OCI-LY7 (cell line): ENCODE measurements at regions of chr2 and their contacts with region 1.

Region 1: DNA sequence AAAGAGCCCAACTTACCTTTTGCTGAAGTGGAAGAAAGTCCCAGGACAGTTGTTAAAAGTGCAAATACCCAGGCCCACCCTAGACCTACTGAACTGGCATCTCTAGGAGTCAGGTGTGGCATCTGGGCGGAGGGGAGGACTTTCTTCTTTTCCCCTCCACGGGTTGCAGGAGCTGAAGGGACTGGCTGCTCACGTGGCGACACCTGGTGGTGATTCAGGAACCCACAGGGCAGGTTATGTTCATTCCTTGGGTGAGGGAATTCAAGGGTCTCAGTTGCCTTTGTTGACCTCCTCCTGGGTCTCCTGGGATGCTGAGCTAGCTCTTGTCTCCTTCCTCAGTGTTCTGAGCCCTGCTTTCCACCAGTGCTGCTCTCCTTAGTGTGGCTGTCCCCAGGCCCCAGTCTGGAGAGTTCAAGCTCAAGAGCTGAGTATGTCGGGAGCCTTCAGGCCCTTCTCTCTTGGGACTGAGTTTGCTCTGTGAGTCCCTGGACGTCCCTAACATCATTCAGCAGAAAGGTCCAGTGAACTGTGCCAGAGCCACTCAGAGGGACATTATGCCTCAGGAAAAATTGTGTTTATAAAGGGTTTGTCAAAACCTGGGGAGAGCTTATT is 56.9 kb downstream of the DYSF start:
- DNase-seq: peak; percentile 71
- H3K4me3 ChIP-seq: no peak overlapping the region
- H3K27ac ChIP-seq: no peak overlapping the region
- H3K4me1 ChIP-seq: no peaks in the 10 kb centered on the region
- CTCF ChIP-seq: peak; percentile 93

Region 2: GRCh38 chr2:71299507-71299906 is 210.8 kb before region 1 on chr2:
- CTCF ChIA-PET with region 1: interaction called, 4 read pairs
- POLR2A ChIA-PET with region 1: interaction called, 3 read pairs
- intact Hi-C with region 1: loop called (anchors 1 kb)
- DNase-seq: peak; percentile 45
- H3K4me3 ChIP-seq: no peak overlapping the region
- H3K27ac ChIP-seq: no peak overlapping the region
- H3K4me1 ChIP-seq: no peaks in the 10 kb centered on the region
- CTCF ChIP-seq: peak; percentile 95

Region 3: DNA sequence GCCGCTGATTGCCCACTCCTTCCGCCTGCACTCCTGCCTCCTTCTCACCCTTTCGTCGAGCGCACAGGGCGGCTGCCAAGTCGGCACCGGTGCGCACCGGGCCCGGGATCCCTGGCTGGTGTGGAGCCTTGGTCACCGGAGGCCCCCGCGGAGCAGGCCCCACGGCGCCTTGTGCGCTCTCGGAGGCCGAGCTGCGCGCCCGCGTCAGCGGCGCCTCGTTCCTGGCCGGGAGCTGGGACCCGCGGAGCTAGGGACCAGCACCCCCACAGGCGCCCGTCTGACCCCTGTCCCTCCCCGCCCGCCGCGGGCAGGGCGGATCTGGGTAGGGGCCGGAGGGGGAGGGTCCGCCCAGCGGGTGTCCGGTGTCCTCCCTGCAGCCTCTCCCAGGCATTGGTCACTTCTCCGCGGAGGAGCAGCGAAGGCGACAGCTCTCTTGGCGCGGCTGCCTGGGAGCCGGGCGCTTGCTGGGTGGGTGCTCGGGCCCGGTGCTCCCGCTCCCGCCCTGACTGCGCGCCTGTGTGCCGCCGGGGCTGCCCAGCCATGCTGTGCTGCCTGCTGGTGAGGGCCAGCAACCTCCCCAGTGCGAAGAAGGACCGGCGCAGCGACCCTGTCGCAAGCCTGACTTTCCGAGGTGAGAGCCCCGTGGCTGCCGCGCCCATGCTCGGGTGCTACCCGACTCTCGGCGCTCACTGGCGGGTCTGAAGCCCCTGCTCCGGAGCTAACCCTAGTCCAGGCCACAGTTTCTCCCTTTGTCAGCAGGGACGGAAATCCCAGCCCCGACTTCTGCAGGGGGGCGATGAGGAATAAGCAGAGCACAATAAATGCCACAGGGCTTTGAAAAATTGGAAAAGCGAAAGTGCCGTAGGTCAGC is 43.8 kb before region 1 on chr2:
- CTCF ChIA-PET with region 1: no interaction called
- POLR2A ChIA-PET with region 1: no interaction called
- intact Hi-C with region 1: loop called (anchors 10 kb)
- DNase-seq: no peak
- H3K4me3 ChIP-seq: no peak overlapping the region
- H3K27ac ChIP-seq: no peak overlapping the region
- H3K4me1 ChIP-seq: no peaks in the 10 kb centered on the region
- CTCF ChIP-seq: no peak

Region 4: DNA sequence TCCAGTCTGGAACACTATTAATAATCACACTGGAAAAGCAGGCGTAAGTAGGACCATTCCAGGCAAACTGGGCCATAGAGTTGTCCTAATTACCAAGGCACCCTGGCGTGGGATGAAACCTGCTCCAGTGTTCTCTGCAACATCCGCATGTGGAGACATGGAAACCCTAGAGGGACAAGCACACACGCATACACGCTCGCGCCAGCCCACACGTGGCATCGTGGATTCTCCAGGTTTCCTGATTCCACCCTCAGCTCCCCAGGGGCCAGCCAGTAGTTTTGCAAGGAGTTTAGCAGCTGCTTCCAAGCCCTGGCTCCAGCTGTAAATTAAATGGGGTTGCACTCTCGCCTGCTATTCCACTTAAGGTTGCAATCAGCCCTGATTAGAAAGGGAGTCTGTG is 70.7 kb after region 1 on chr2:
- CTCF ChIA-PET with region 1: no interaction called
- POLR2A ChIA-PET with region 1: no interaction called
- intact Hi-C with region 1: no loop called
- DNase-seq: no peak
- H3K4me3 ChIP-seq: no peak overlapping the region
- H3K27ac ChIP-seq: no peak overlapping the region
- H3K4me1 ChIP-seq: no peaks in the 10 kb centered on the region
- CTCF ChIP-seq: no peak